ENCODE measurements at regions of chr11 and their contacts with region 1.

Region 1: GRCh38 chr11:8219257-8220021 is 44.2 kb downstream of the LMO1 start:
- DNase-seq: peak; percentile 51 to 76 (median 68)
- ATAC-seq: peak; percentile 96
- H3K4me3 ChIP-seq: no peak overlapping the region
- H3K27ac ChIP-seq: no peak overlapping the region
- H3K4me1 ChIP-seq: no peaks in the 10 kb centered on the region; a peak in 2 of 5 replicates
- H3K27me3 ChIP-seq: peaks cover 10 to 61% of the 10 kb centered on the region in 2 experiments; a peak in 4 of 5 replicates
- CTCF ChIP-seq: peak; percentile 64 to 75 (median 67)
- EP300 ChIP-seq: no peak
- POLR2A ChIP-seq: no peak
- RAD21 ChIP-seq: peak; percentile 6 to 48; a peak in 2 of 4 replicates

Region 2: DNA sequence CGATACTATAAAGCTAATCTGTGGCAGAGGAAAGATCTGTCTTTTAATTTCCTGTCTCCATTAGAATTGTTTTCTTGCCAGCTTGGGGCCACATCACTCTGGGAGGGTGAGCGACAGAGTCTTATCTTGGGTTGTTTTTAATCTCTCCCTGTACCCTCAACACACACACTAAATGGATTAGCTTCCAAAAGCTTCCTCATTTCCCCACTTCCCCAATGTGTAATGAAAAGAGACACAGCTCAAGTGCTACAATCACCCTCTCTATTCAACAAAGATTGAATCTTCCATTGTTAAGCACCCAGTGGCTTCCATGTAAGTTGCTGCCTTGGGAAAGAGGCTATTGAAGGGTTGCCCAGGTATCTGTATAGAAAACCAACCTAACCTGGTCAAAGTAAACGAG is 729.4 kb after region 1 on chr11:
- CTCF ChIA-PET with region 1: no interaction called
- POLR2A ChIA-PET with region 1: no interaction called
- in situ Hi-C with region 1: no loop called
- intact Hi-C with region 1: loop called (anchors 5 kb)
- DNase-seq: no peak
- ATAC-seq: no peak
- H3K4me3 ChIP-seq: no peak overlapping the region
- H3K27ac ChIP-seq: no peak overlapping the region
- H3K4me1 ChIP-seq: 0 out of 5 replicates have a peak, but pooled peaks cover 0 to 4% of the 10 kb centered on the region in 2 experiments
- H3K27me3 ChIP-seq: no peaks in the 10 kb centered on the region
- CTCF ChIP-seq: no peak
- EP300 ChIP-seq: no peak
- POLR2A ChIP-seq: no peak
- RAD21 ChIP-seq: no peak